Prostate gland (tissue), 2 donors: ENCODE measurements at regions of chr11 and their contacts with region 1.

Region 1: DNA sequence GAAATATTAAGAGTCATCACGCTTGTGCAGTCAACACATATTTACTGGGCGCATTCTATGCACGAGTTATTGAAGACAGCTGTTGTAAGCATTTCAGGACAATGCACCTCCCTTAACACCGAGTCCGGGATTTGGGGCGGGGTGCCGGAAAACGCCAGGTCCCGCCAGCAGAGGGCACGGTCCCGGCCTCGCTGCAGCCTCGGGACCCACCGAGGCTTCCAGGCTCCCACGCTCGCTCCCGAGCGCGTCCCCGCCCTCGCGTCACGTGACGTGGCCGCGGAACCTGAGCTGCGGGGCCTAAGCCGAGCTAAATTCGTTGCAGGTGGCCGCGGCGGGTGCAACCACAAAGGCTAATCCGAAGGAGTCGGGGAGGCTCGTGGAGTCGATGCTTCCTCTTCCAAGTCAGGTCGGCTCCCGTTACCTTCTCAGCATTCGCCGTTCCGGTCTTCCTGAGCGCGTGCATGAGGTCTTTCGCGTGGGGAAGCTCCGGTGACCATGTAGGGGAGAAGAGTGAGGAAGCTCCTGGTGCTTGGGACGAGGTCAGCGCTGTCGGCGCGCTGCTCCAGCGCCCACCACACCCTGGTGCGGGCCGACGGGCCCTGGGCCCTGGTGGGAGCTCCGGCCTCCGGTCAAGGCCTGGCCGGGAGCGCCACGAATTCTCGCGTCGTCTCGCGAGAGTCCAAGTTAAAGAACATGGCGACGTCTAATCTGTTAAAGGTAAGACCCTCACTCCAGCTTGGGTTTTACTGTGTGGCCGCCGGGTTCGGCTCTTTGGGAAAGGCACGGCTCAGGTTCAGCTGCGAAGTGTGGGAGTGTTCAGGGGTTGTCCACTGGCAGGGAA is at the start of gene CUL5:
- DNase-seq: peak; percentile 86
- H3K4me3 ChIP-seq: peak within 1 kb of the TSS; percentile 89 to 91
- H3K27ac ChIP-seq: peak within 1 kb of the TSS; percentile 97 to 98
- H3K4me1 ChIP-seq: no peaks in the 10 kb centered on the region
- H3K27me3 ChIP-seq: no peaks in the 10 kb centered on the region
- CTCF ChIP-seq: peak; percentile 81 to 91 (median 86)
- POLR2A ChIP-seq: no peak
- total RNA-seq, gene CUL5: 28.1 to 46.4 TPM

Region 2: GRCh38 chr11:108121274-108122155 is 112.6 kb after region 1 on chr11 and contains the start of gene ACAT1:
- intact Hi-C with region 1: loop called (anchors 5 kb)
- DNase-seq: peak; percentile 94
- H3K4me3 ChIP-seq: peak within 1 kb of the TSS; percentile 69 to 73
- H3K27ac ChIP-seq: peak within 1 kb of the TSS; percentile 87 to 89
- H3K4me1 ChIP-seq: peaks cover 4% of the 10 kb centered on the region
- H3K27me3 ChIP-seq: no peaks in the 10 kb centered on the region
- CTCF ChIP-seq: peak in 3 of 4 experiments; percentile 40 to 76 (median 69)
- POLR2A ChIP-seq: peak; percentile 70
- total RNA-seq, gene ACAT1: 65.1 to 152 TPM

Region 3: DNA sequence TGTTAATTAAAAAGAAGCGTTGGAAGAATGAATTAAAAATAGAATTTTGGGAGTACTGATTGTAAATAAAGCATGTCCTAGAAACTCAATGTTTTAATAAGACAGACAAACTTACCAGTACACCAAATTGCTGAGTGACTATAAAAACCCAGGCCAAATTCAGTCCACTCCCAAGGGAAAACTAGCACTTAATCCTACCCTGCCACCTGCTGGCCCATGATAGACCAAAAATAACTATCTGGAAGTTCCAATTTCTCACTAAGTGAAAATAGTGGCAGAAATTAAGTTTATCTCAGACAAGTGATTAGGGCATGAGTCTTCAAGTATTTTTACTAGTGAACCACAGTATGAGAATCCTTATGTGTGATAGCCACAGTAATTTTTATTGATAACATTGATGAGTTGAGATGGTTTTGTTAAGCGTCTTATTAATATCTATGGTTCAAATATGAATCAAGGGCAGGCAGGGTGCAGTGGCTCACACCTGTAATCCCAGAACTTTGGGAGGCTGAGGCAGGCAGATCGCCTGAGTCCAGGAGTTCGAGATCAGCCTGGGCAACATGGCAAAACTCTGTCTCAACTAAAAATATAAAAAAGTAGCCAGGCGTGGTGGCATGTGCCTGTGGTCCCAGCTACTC is 646.2 kb after region 1 on chr11:
- intact Hi-C with region 1: loop called (anchors 10 kb)
- DNase-seq: peak; percentile 54
- H3K4me3 ChIP-seq: no peak overlapping the region
- H3K27ac ChIP-seq: no peak overlapping the region
- H3K4me1 ChIP-seq: no peaks in the 10 kb centered on the region
- H3K27me3 ChIP-seq: no peaks in the 10 kb centered on the region
- CTCF ChIP-seq: peak in 3 of 4 experiments; percentile 50 to 72 (median 66)
- POLR2A ChIP-seq: no peak